HCT116 (cell line): ENCODE measurements at regions of chr4 and their contacts with region 1.

Region 1: GRCh38 chr4:37567841-37568240 is 118.3 kb downstream of the RELL1 start:
- DNase-seq: no peak
- ATAC-seq: no peak
- H3K4me3 ChIP-seq: no peak overlapping the region
- H3K27ac ChIP-seq: no peak overlapping the region
- H3K4me1 ChIP-seq: no peaks in the 10 kb centered on the region
- H3K27me3 ChIP-seq: no peaks in the 10 kb centered on the region
- CTCF ChIP-seq: no peak
- POLR2A ChIP-seq: no peak
- RAD21 ChIP-seq: no peak

Region 2: DNA sequence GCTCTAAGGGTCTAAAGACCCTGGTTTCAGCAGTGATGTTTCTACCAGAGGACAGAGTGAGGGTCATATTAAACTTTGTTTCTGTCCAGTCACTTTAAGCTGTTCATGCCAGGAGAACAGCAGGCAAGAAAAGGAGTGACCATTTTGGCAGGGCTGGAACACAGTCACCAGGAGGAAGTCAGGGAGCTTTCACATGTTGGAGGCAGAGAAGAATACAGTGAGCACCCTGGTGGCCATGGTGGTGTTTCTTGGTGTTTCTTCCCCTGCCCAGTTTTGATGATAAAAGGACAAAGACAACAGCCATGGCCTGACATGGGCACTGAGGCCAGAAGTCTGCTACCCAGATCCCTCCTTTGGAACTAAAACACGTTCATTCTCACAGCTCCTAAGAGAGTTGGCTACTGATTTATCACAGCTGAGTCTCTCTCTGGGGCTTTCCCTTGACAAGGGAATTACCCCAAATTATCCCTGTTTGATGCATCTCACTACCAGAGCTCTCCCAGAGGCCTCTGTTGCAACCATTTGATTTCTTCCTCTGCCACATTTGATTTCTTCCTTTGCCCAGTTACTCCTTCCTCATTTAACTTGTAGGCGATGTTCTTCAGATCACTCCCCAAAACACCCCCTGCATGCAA is 429.7 kb before region 1 on chr4:
- CTCF ChIA-PET with region 1: no interaction called
- POLR2A ChIA-PET with region 1: no interaction called
- RAD21 ChIA-PET with region 1: no interaction called
- intact Hi-C with region 1: no loop called
- DNase-seq: no peak
- ATAC-seq: no peak
- H3K4me3 ChIP-seq: no peak overlapping the region
- H3K27ac ChIP-seq: no peak overlapping the region
- H3K4me1 ChIP-seq: no peaks in the 10 kb centered on the region
- H3K27me3 ChIP-seq: no peaks in the 10 kb centered on the region
- CTCF ChIP-seq: no peak
- POLR2A ChIP-seq: no peak
- RAD21 ChIP-seq: no peak

Region 3: DNA sequence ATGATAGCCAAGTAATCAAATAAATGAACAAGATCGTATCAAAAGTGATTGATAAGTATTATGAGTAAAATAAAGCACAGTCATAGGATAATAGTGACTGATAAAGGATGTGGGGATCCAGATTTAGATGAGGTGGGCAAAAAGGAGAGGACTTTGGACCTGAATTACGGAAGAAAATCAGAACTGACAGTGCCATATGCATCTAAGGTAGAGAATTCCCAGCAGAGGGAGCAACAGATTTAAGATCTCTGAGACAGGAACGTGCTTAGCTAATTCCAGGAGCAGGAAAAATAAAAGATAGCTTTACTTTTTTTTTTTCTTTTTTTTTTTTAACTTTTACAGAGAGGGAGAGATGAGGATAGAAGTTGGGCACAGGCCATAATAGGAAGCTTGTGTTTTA is 133.4 kb before region 1 on chr4:
- CTCF ChIA-PET with region 1: interaction called, 19 read pairs
- POLR2A ChIA-PET with region 1: no interaction called
- RAD21 ChIA-PET with region 1: no interaction called
- intact Hi-C with region 1: no loop called
- DNase-seq: peak; percentile 16
- ATAC-seq: peak; percentile 55
- H3K4me3 ChIP-seq: no peak overlapping the region
- H3K27ac ChIP-seq: no peak overlapping the region
- H3K4me1 ChIP-seq: no peaks in the 10 kb centered on the region
- H3K27me3 ChIP-seq: no peaks in the 10 kb centered on the region
- CTCF ChIP-seq: peak; percentile 28 to 33 (median 31); a peak in 3 of 6 replicates
- POLR2A ChIP-seq: no peak
- RAD21 ChIP-seq: peak; percentile 49

Region 4: DNA sequence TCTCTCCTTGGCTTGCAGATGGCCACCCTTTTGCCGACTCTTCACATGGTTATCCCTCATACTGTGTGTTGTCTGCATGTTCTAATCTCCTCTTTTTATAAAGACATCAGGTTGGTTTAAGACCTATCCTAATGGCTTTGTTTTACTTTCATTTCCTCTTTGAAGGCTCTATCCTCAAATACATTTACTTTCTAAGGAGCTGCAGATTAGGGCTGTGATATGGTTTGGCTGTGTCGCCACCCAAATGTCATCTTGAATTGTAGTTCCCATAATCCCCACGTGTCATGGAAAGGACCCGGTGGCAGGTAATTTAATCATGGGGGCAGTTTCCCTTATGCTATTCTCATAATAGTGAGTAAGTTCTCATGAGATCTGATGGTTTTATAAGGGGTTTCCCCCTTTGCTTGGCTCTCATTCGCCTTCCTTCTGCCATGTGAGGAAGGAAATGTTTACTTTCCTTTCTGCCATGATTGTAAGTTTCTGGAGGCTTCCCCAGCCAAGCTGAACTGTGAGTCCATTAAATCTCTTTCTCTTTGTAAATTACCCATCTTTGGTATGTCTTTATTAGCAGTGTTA is 86.2 kb before region 1 on chr4:
- CTCF ChIA-PET with region 1: no interaction called
- POLR2A ChIA-PET with region 1: no interaction called
- RAD21 ChIA-PET with region 1: no interaction called
- intact Hi-C with region 1: no loop called
- DNase-seq: no peak
- ATAC-seq: no peak
- H3K4me3 ChIP-seq: no peak overlapping the region
- H3K27ac ChIP-seq: no peak overlapping the region
- H3K4me1 ChIP-seq: no peaks in the 10 kb centered on the region
- H3K27me3 ChIP-seq: no peaks in the 10 kb centered on the region
- CTCF ChIP-seq: no peak
- POLR2A ChIP-seq: no peak
- RAD21 ChIP-seq: no peak